SK-N-SH (cell line): ENCODE measurements at regions of chr2 and their contacts with region 1.

Region 1: GRCh38 chr2:134118279-134119116 is 135.4 kb upstream of the MGAT5 start:
- DNase-seq: peak; percentile 79
- H3K4me3 ChIP-seq: no peak overlapping the region; a peak in 1 of 4 replicates
- H3K27ac ChIP-seq: peak overlapping the region in 1 of 2 experiments; percentile 62; a peak in 2 of 4 replicates
- H3K4me1 ChIP-seq: peaks cover 0 to 28% of the 10 kb centered on the region in 2 experiments; a peak in 2 of 4 replicates
- H3K27me3 ChIP-seq: no peaks in the 10 kb centered on the region
- CTCF ChIP-seq: peak; percentile 89
- EP300 ChIP-seq: no peak
- RAD21 ChIP-seq: peak; percentile 97

Region 2: GRCh38 chr2:133886735-133887660 is 231.5 kb before region 1 on chr2:
- CTCF ChIA-PET with region 1: interaction called, 72 read pairs
- POLR2A ChIA-PET with region 1: no interaction called
- DNase-seq: peak; percentile 65
- H3K4me3 ChIP-seq: no peak overlapping the region; a peak in 1 of 4 replicates
- H3K27ac ChIP-seq: no peak overlapping the region
- H3K4me1 ChIP-seq: peaks cover 0 to 9% of the 10 kb centered on the region in 2 experiments; a peak in 1 of 4 replicates
- H3K27me3 ChIP-seq: no peaks in the 10 kb centered on the region; the same call in 1 of the 2 replicates
- CTCF ChIP-seq: peak; percentile 69
- EP300 ChIP-seq: no peak
- RAD21 ChIP-seq: peak; percentile 86

Region 3: GRCh38 chr2:134137182-134137611 is 18.7 kb after region 1 on chr2:
- CTCF ChIA-PET with region 1: interaction called, 15 read pairs
- POLR2A ChIA-PET with region 1: no interaction called
- DNase-seq: no peak
- H3K4me3 ChIP-seq: peak overlapping the region in 1 of 2 experiments; percentile 9; a peak in 2 of 4 replicates
- H3K27ac ChIP-seq: peak overlapping the region; percentile 73 to 79
- H3K4me1 ChIP-seq: peaks cover 19 to 39% of the 10 kb centered on the region in 2 experiments; a peak in 3 of 4 replicates
- H3K27me3 ChIP-seq: no peaks in the 10 kb centered on the region
- CTCF ChIP-seq: no peak
- EP300 ChIP-seq: peak in 1 of 2 experiments; percentile 34; a peak in 1 of 4 replicates
- RAD21 ChIP-seq: no peak

Region 4: DNA sequence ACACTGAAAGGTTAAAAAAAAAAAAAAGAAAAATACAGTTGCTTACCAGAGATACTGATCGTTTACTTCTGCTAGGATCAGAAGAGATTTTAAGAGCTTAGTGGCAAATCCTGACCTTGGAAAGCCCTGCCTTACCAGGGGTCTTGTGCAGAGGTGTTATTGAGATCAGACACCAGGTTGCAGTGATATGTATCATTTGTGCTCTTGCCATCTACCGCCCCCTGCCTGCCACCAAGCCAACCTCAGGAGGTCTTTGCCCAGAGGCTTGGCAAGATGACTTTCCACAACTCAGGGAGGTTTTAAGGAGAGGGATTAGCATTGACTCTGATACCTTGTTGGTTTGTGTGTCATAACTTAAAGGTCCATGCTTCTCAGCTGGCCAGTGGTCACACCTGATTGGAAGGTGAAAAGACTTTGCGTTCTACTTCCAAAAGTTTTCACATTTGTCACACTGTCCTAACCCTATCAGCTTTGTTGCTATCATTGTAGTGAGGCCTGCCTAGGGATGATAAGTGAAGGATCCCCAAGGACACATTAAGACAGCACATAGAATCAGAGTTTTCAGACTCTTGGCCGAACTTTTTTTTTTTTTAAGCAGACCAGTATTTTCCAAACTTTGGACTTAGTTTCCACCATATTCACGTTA is 89.2 kb after region 1 on chr2:
- CTCF ChIA-PET with region 1: interaction called, 24 read pairs
- POLR2A ChIA-PET with region 1: no interaction called
- DNase-seq: peak; percentile 44
- H3K4me3 ChIP-seq: no peak overlapping the region; a peak in 1 of 4 replicates
- H3K27ac ChIP-seq: no peak overlapping the region
- H3K4me1 ChIP-seq: peaks cover 6 to 17% of the 10 kb centered on the region in 2 experiments; a peak in 3 of 4 replicates
- H3K27me3 ChIP-seq: no peaks in the 10 kb centered on the region
- CTCF ChIP-seq: peak; percentile 76
- EP300 ChIP-seq: no peak
- RAD21 ChIP-seq: peak; percentile 70

Region 5: GRCh38 chr2:134245340-134245984 is 127.0 kb after region 1 on chr2:
- CTCF ChIA-PET with region 1: interaction called, 130 read pairs
- POLR2A ChIA-PET with region 1: interaction called, 4 read pairs
- DNase-seq: peak; percentile 43
- H3K4me3 ChIP-seq: no peak overlapping the region; a peak in 1 of 4 replicates
- H3K27ac ChIP-seq: peak overlapping the region in 1 of 2 experiments; percentile 79; a peak in 2 of 4 replicates
- H3K4me1 ChIP-seq: peaks cover 6 to 33% of the 10 kb centered on the region in 2 experiments; a peak in 3 of 4 replicates
- H3K27me3 ChIP-seq: no peaks in the 10 kb centered on the region
- CTCF ChIP-seq: peak; percentile 90
- EP300 ChIP-seq: no peak
- RAD21 ChIP-seq: peak; percentile 78

Region 6: DNA sequence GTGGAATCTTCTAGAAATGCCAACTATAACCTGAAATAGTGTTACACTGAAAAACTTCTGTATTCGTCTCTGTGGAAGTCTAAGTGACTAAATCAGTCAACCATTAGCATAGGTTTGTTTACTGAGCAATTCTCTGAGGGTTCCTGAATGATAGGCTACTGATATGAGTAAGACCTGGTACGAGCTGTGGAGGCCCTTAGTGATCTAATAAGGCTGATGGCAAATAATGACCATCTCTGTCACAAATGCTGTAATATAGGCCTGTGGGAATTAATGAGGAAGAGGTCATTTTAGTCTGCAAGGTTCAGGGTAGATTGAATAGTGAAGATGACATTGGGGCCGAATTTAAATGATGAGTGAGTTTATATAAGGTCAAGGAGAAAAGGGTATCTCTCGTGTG is 217.9 kb after region 1 on chr2:
- CTCF ChIA-PET with region 1: interaction called, 30 read pairs
- POLR2A ChIA-PET with region 1: interaction called, 5 read pairs
- DNase-seq: no peak
- H3K4me3 ChIP-seq: no peak overlapping the region
- H3K27ac ChIP-seq: peak overlapping the region in 1 of 2 experiments; percentile 100; a peak in 2 of 4 replicates
- H3K4me1 ChIP-seq: peaks cover 0 to 37% of the 10 kb centered on the region in 2 experiments; a peak in 2 of 4 replicates
- H3K27me3 ChIP-seq: no peaks in the 10 kb centered on the region
- CTCF ChIP-seq: no peak
- EP300 ChIP-seq: no peak
- RAD21 ChIP-seq: no peak

Region 7: DNA sequence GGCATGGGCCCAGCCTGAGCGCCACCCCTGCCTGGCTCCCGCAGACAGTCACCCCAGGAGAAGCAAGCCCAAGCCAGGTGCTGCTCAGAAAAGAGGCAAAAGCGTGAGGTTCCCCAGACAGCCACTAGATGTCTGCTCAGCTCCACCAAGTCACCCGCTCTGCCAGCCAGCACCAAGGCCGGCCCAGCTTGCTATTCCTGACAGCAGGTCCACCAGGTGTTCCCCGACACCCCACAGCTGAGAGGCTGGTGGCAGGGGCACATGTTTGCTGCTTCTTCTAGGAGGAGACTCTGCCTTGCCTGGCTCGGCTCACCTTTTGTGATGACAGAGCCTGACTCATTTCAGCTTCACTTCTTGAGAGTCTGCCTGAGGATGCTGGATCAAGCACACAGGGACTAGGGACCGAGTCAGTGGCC is 342.1 kb after region 1 on chr2:
- CTCF ChIA-PET with region 1: interaction called, 111 read pairs
- POLR2A ChIA-PET with region 1: interaction called, 3 read pairs
- DNase-seq: peak; percentile 76
- H3K4me3 ChIP-seq: peak overlapping the region in 1 of 2 experiments; percentile 27; a peak in 1 of 4 replicates
- H3K27ac ChIP-seq: no peak overlapping the region; a peak in 1 of 4 replicates
- H3K4me1 ChIP-seq: peaks cover 0 to 14% of the 10 kb centered on the region in 2 experiments; a peak in 1 of 4 replicates
- H3K27me3 ChIP-seq: no peaks in the 10 kb centered on the region
- CTCF ChIP-seq: peak; percentile 55
- EP300 ChIP-seq: no peak
- RAD21 ChIP-seq: peak; percentile 88